ENCODE measurements at regions of chr12 and their contacts with region 1.

Region 1: GRCh38 chr12:93569656-93570551 is 2.6 kb upstream of the SOCS2 start:
- DNase-seq: no peak
- ATAC-seq: peak; percentile 73
- H3K4me3 ChIP-seq: peak overlapping the region; percentile 81
- H3K27ac ChIP-seq: no peak overlapping the region
- H3K4me1 ChIP-seq: peaks cover 6% of the 10 kb centered on the region; the same call in 1 of the 2 replicates
- H3K27me3 ChIP-seq: peaks cover 11 to 15% of the 10 kb centered on the region in 2 experiments
- CTCF ChIP-seq: peak; percentile 73 to 92 (median 83)
- EP300 ChIP-seq: no peak
- POLR2A ChIP-seq: no peak
- RAD21 ChIP-seq: peak; percentile 89

Region 2: DNA sequence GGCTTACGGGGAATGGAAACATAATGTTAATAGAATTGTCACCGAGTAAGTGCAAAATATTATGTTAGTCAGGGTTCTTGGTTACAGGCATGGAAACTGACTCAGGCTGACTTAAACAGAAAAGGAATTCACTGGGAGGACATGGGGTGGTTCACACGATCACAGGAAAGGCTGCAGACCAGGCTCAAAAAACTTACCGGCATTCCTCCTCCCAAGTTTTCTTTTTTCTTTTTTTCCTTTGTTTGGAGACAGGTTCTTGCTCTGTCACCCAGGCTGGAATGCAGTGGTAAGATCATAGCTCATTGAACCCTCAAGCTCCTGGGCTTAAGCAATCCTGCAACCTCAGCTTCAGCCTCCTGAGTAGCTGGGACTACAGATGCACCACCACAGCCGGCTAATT is 116.3 kb before region 1 on chr12:
- CTCF ChIA-PET with region 1: no interaction called
- POLR2A ChIA-PET with region 1: no interaction called
- RAD21 ChIA-PET with region 1: no interaction called
- SMC1A ChIA-PET with region 1: no interaction called
- in situ Hi-C with region 1: no loop called
- intact Hi-C with region 1: no loop called
- DNase-seq: no peak
- ATAC-seq: no peak
- H3K4me3 ChIP-seq: no peak overlapping the region
- H3K27ac ChIP-seq: no peak overlapping the region
- H3K4me1 ChIP-seq: peaks cover 4% of the 10 kb centered on the region; the same call in 1 of the 2 replicates
- H3K27me3 ChIP-seq: no peaks in the 10 kb centered on the region
- CTCF ChIP-seq: no peak
- EP300 ChIP-seq: no peak
- POLR2A ChIP-seq: no peak
- RAD21 ChIP-seq: no peak

Region 3: GRCh38 chr12:93502802-93503623 is 66.9 kb before region 1 on chr12:
- CTCF ChIA-PET with region 1: interaction called, 38 read pairs
- POLR2A ChIA-PET with region 1: interaction called, 9 read pairs
- RAD21 ChIA-PET with region 1: interaction called, 20 read pairs
- SMC1A ChIA-PET with region 1: interaction called, 23 read pairs
- in situ Hi-C with region 1: no loop called
- intact Hi-C with region 1: loop called (anchors 2 kb)
- DNase-seq: no peak
- ATAC-seq: peak; percentile 58
- H3K4me3 ChIP-seq: no peak overlapping the region
- H3K27ac ChIP-seq: no peak overlapping the region
- H3K4me1 ChIP-seq: peaks cover 5% of the 10 kb centered on the region; the same call in 1 of the 2 replicates
- H3K27me3 ChIP-seq: no peaks in the 10 kb centered on the region
- CTCF ChIP-seq: peak; percentile 64 to 73 (median 72)
- EP300 ChIP-seq: no peak
- POLR2A ChIP-seq: no peak
- RAD21 ChIP-seq: peak; percentile 84

Region 4: GRCh38 chr12:93661021-93661420 is 91.1 kb after region 1 on chr12:
- CTCF ChIA-PET with region 1: no interaction called
- POLR2A ChIA-PET with region 1: no interaction called
- RAD21 ChIA-PET with region 1: no interaction called
- SMC1A ChIA-PET with region 1: no interaction called
- in situ Hi-C with region 1: no loop called
- intact Hi-C with region 1: no loop called
- DNase-seq: no peak
- ATAC-seq: no peak
- H3K4me3 ChIP-seq: no peak overlapping the region
- H3K27ac ChIP-seq: no peak overlapping the region
- H3K4me1 ChIP-seq: no peaks in the 10 kb centered on the region
- H3K27me3 ChIP-seq: no peaks in the 10 kb centered on the region
- CTCF ChIP-seq: no peak
- EP300 ChIP-seq: no peak
- POLR2A ChIP-seq: no peak
- RAD21 ChIP-seq: no peak

Region 5: GRCh38 chr12:93677195-93678064 is 107.5 kb after region 1 on chr12 and contains the start of gene CRADD:
- CTCF ChIA-PET with region 1: no interaction called
- POLR2A ChIA-PET with region 1: no interaction called
- RAD21 ChIA-PET with region 1: interaction called, 3 read pairs
- SMC1A ChIA-PET with region 1: interaction called, 3 read pairs
- in situ Hi-C with region 1: no loop called
- intact Hi-C with region 1: loop called (anchors 1 kb)
- DNase-seq: peak; percentile 99
- ATAC-seq: peak; percentile 95
- H3K4me3 ChIP-seq: peak within 1 kb of the TSS; percentile 73
- H3K27ac ChIP-seq: peak within 1 kb of the TSS; percentile 86
- H3K4me1 ChIP-seq: peaks cover 10% of the 10 kb centered on the region
- H3K27me3 ChIP-seq: no peaks in the 10 kb centered on the region
- CTCF ChIP-seq: no peak
- EP300 ChIP-seq: no peak
- POLR2A ChIP-seq: peak; percentile 90
- RAD21 ChIP-seq: no peak
- polyA plus RNA-seq, gene CRADD: 7.6 to 8.8 TPM

Region 6: GRCh38 chr12:93766796-93767523 is 197.1 kb after region 1 on chr12:
- CTCF ChIA-PET with region 1: interaction called, 11 read pairs
- POLR2A ChIA-PET with region 1: no interaction called
- RAD21 ChIA-PET with region 1: interaction called, 3 read pairs
- SMC1A ChIA-PET with region 1: interaction called, 6 read pairs
- in situ Hi-C with region 1: no loop called
- intact Hi-C with region 1: no loop called
- DNase-seq: no peak
- ATAC-seq: peak; percentile 77
- H3K4me3 ChIP-seq: no peak overlapping the region
- H3K27ac ChIP-seq: no peak overlapping the region
- H3K4me1 ChIP-seq: no peaks in the 10 kb centered on the region
- H3K27me3 ChIP-seq: no peaks in the 10 kb centered on the region
- CTCF ChIP-seq: peak; percentile 19 to 57 (median 49); a peak in 4 of 6 replicates
- EP300 ChIP-seq: no peak
- POLR2A ChIP-seq: no peak
- RAD21 ChIP-seq: peak; percentile 74

Region 7: DNA sequence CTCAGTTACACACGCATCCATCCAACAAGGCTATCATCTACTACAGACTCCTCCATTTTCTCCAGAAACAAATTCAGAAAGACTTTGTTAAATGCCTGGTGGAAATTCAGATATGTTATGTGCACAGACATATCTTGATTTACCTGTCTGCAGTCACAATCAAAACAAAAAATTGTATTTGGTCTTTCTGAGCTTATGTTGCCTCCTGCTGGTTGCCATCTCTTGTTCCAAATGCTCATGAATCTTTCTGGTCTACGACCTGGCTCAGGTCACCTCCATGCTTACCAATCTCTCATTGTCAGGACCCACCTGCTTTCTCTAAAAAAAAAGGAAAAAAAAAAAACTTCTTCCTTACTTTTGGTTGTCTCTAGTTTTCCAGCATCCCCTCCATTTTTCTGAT is 409.3 kb after region 1 on chr12:
- CTCF ChIA-PET with region 1: interaction called, 8 read pairs
- POLR2A ChIA-PET with region 1: interaction called, 3 read pairs
- RAD21 ChIA-PET with region 1: interaction called, 7 read pairs
- SMC1A ChIA-PET with region 1: interaction called, 11 read pairs
- in situ Hi-C with region 1: no loop called
- intact Hi-C with region 1: loop called (anchors 1 kb)
- DNase-seq: peak; percentile 8
- ATAC-seq: peak; percentile 42; the same call in 2 of the 3 replicates
- H3K4me3 ChIP-seq: no peak overlapping the region
- H3K27ac ChIP-seq: no peak overlapping the region
- H3K4me1 ChIP-seq: no peaks in the 10 kb centered on the region
- H3K27me3 ChIP-seq: no peaks in the 10 kb centered on the region; a peak in 2 of 4 replicates
- CTCF ChIP-seq: peak; percentile 51 to 65 (median 55)
- EP300 ChIP-seq: no peak
- POLR2A ChIP-seq: no peak
- RAD21 ChIP-seq: peak; percentile 84

Measured in GM12878 (cell line).